ENCODE measurements at regions of chr10 and their contacts with region 1.

Region 1: DNA sequence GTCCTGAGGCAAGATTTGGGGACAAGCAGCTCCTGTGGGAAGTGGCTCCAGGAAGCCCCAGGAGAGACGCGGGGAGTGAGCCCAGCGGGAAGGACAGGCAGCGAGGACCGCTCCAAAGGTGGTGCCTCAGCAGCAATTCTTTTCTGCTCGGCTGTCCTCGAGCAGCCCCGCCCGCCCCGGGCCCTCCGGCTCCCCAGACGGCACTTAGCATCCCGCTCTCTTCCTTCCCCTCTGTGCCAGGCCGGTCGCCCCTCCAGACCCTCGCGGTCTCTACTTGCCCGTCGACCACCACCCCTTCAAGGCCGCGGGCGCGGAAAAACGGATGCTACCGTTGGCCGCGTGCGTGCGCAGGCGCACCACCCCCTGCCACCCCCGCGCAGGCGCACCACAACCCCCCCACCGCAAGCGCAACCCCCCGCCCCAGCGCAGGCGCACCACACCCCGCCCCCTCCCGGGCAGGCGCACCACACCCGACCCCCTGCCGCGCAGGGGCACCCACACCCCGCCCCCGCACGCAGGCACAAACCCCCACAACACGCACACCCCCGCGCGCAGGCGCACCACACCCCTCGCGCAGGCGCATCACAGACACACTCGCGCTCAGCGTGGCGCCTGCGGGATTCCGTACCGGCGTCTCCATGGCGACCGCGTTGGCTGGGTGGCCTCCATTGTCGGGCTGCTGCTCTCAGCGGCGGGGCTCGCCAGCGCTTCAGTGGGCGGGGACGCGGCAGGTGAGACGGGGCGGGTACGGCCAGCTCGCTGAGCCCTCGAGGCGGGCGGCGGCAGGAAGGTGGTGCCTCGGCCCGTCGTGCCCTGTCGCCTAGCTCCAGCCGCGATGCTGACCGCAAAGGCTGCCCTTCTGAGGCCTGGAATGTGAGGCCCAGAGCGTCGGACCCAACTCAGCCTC is at the start of gene LRRC27:
- ATAC-seq: peak; percentile 79 to 93 (median 90)
- H3K4me3 ChIP-seq: peak within 1 kb of the TSS; percentile 67 to 100 (median 90)
- H3K27ac ChIP-seq: peak within 1 kb of the TSS; percentile 50 to 73
- H3K4me1 ChIP-seq: peaks cover 32 to 38% of the 10 kb centered on the region in 2 donors
- total RNA-seq, gene LRRC27: 7.2 to 21.5 (median 15.1) TPM

Region 2: DNA sequence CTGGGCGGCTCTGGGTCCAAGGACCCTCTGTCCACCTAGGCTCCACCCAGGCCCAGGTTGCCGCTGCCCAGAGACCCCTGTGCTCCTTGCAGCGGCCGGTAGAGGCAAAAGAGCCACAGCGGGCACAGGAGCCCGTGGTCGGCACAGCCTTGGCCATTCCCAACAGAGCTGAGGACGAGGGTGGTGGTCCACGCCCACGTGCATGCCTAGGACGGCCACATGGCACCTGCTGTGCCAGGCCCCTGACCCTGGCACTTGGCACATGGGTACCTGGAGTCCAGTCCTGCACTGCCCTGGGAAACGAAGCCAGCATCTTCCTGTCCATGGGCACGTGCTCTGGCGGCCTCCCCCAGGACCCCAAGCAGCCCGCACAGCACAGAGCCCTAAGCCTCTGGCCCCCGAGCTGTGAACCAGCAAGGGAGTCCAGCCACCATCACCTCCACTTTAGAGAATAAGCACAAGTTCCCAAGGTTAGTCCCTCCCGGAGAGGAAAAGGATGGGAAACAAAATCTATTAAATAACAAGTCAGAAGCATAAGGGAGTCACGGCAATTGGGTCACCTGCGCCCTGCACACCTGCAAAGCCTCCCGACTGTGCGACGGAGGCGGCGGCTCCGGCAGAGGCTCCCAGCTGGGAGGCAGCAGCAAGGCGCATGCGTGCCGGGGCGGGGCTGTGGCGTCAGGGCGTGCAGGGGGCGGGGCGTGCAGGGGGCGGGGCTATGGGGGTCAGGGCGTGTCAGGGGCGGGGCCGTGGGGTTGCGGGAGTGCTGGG is 83.1 kb before region 1 on chr10:
- in situ Hi-C with region 1: loop called in 1 of 9 experiments (anchors 25 kb)
- ATAC-seq: peak in 7 of 8 experiments; percentile 5 to 77 (median 60)
- H3K4me3 ChIP-seq: peak overlapping the region; percentile 40 to 50 (median 42)
- H3K27ac ChIP-seq: no peak overlapping the region
- H3K4me1 ChIP-seq: peaks cover 25 to 26% of the 10 kb centered on the region in 2 donors

Measured in motor neuron (in vitro differentiated cells).